PC-3 (cell line): ENCODE measurements at regions of chr19 and their contacts with region 1.

Region 1: DNA sequence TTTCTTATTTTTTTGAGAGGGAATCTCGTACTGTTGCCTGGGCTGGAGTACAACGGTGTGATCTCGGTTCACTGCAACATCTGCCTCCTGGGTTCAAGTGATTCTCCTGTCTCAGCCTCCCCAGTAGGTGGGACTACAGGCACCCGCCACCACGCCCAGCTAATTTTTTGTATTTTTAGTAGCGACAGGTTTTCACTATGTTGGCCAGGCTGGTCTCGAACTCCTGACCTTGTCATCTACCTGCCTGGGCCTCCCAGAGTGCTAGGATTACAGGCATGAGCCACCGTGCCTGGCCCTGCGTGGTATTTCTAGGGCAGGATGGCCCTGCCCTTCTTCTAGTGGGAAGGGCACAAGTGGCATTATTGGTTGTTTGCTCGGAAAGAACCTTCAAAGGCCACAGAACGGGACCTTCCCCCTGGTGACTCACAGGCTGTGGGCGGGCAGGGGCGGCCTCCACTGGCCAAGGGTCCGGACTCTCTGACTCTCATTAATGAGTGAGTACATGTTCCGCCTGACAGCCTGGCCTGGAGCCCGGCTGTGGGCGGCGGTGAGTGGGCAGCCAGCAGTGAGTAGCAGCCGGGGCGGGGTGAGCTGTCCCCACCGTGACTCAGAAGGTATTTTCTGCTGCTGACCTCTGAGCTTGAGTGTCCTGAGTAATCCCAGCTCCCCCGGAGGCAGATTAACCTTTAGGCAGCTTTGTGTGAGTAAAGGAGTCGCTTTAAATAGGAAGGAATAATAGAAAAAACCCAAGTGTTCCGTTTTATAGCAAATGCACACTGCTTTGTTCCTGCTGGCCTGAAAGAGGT is 5.1 kb downstream of the DOT1L start:
- DNase-seq: peak; percentile 97
- ATAC-seq: peak; percentile 81
- H3K4me3 ChIP-seq: peak overlapping the region; percentile 42; the same call in 1 of the 2 replicates
- H3K27ac ChIP-seq: peak overlapping the region; percentile 87
- H3K4me1 ChIP-seq: peaks cover 38% of the 10 kb centered on the region
- H3K27me3 ChIP-seq: no peaks in the 10 kb centered on the region
- CTCF ChIP-seq: no peak

Region 2: DNA sequence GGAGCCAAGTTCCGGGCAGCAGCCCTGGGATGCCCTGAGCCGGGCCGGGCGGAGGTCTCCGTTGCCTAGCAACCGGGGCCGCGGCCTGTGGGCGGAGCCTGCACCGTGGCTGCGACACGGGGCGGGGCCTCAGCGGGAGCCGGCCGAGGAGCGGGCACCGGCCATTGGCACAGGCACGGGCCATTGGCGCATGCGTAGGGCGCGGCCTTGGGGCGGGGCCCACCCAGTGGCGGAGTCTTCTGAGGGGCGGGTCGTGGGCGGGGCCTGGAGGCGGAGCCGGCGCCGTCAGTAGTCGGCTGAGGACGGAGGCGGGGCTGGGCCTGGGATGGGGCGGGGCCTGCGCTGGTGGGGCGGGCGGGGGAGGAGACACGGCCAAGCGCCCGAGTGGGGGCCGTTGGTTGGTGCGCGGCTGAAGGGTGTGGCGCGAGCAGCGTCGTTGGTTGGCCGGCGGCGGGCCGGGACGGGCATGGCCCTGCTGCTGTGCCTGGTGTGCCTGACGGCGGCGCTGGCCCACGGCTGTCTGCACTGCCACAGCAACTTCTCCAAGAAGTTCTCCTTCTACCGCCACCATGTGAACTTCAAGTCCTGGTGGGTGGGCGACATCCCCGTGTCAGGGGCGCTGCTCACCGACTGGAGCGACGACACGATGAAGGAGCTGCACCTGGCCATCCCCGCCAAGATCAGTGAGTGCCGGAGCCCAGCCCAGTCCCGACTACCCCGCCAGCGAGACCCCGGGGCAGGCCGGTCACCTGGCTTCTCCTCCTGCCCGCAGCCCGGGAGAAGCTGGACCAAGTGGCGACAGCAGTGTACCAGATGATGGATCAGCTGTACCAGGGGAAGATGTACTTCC is 72.1 kb before region 1 on chr19 and contains the start of gene IZUMO4:
- CTCF ChIA-PET with region 1: no interaction called
- POLR2A ChIA-PET with region 1: no interaction called
- intact Hi-C with region 1: no loop called
- DNase-seq: peak; percentile 94
- ATAC-seq: peak; percentile 85
- H3K4me3 ChIP-seq: peak within 1 kb of the TSS; percentile 87
- H3K27ac ChIP-seq: peak within 1 kb of the TSS; percentile 71
- H3K4me1 ChIP-seq: peaks cover 5% of the 10 kb centered on the region; the same call in 1 of the 2 replicates
- H3K27me3 ChIP-seq: no peaks in the 10 kb centered on the region
- CTCF ChIP-seq: peak; percentile 37
- total RNA-seq, gene IZUMO4: 1.0 and 3.6 TPM in 2 replicates

Region 3: DNA sequence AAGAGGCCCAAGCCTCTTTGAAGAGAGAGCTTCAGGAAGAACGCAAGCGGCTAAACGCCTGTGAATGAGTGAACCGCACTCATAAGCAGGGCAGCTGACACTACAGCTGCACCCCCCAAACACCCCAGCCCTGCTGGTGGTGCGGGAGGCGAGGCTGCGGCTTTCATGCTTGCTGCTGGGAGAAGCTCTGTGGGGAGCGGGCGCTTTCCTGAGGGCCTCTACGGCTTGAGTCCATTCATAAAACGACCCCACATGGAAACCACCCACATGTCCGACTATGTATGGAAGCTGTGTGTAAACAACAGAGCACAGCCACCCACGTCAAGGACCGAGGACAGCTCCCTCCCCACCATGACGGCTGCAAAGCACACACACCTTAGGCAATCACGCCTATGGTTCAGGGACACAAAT is 23.0 kb before region 1 on chr19:
- CTCF ChIA-PET with region 1: no interaction called
- POLR2A ChIA-PET with region 1: no interaction called
- intact Hi-C with region 1: no loop called
- DNase-seq: no peak
- ATAC-seq: no peak
- H3K4me3 ChIP-seq: no peak overlapping the region
- H3K27ac ChIP-seq: no peak overlapping the region
- H3K4me1 ChIP-seq: peaks cover 9% of the 10 kb centered on the region
- H3K27me3 ChIP-seq: no peaks in the 10 kb centered on the region
- CTCF ChIP-seq: no peak

Region 4: DNA sequence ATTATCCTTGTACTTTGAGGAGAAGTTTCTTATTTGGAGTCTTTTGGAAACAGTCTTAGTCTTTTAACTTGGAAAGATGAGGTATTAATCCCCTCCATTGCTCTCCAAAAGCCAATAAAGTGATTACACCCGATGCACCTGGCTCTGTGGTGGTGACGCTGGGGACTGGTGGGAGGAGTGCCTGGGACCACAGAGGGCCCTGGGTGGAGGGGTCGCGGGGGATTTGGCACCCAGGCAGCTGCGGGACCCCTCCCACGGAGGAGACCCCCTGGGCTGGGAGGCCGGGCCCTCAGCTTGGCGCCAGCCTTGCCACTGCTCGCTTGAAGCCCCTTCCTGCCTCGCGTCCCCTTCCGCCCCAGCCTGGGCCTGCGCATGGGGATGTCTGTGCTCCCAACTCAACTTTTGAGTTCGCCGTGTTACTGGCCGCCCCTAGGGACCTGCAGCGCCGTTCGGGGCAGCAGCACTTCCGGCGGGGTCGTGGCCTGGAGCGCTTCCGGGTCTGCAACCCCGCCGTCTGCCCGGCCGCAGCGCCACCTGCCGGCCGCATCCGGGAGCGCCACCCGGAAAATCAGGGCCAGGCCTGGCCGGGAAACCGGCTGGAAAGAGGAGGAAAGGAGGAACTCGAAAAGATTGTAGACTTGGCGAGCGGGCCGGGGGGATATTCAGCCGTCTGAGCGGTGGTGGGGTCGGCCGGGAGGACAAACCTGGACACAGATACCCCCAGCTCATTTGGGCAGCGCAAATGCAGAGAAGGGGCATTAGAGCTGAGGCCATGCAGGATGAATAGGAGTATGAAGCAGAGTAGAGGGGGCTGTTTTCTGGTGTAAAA is 104.7 kb after region 1 on chr19:
- CTCF ChIA-PET with region 1: no interaction called
- POLR2A ChIA-PET with region 1: no interaction called
- intact Hi-C with region 1: loop called (anchors 5 kb)
- DNase-seq: peak; percentile 66
- ATAC-seq: peak; percentile 40
- H3K4me3 ChIP-seq: peak overlapping the region; percentile 51
- H3K27ac ChIP-seq: 0 out of 2 replicates have a peak overlapping the region, but pooled peaks have one; percentile 21
- H3K4me1 ChIP-seq: peaks cover 19% of the 10 kb centered on the region
- H3K27me3 ChIP-seq: no peaks in the 10 kb centered on the region
- CTCF ChIP-seq: peak; percentile 82

Region 5: GRCh38 chr19:2309734-2310362 is 141.0 kb after region 1 on chr19:
- CTCF ChIA-PET with region 1: no interaction called
- POLR2A ChIA-PET with region 1: interaction called, 10 read pairs
- intact Hi-C with region 1: no loop called
- DNase-seq: peak; percentile 43
- ATAC-seq: peak; percentile 58
- H3K4me3 ChIP-seq: no peak overlapping the region
- H3K27ac ChIP-seq: no peak overlapping the region
- H3K4me1 ChIP-seq: no peaks in the 10 kb centered on the region
- H3K27me3 ChIP-seq: no peaks in the 10 kb centered on the region
- CTCF ChIP-seq: no peak